GM12878 (cell line): ENCODE measurements at regions of chr5 and their contacts with region 1.

Region 1: DNA sequence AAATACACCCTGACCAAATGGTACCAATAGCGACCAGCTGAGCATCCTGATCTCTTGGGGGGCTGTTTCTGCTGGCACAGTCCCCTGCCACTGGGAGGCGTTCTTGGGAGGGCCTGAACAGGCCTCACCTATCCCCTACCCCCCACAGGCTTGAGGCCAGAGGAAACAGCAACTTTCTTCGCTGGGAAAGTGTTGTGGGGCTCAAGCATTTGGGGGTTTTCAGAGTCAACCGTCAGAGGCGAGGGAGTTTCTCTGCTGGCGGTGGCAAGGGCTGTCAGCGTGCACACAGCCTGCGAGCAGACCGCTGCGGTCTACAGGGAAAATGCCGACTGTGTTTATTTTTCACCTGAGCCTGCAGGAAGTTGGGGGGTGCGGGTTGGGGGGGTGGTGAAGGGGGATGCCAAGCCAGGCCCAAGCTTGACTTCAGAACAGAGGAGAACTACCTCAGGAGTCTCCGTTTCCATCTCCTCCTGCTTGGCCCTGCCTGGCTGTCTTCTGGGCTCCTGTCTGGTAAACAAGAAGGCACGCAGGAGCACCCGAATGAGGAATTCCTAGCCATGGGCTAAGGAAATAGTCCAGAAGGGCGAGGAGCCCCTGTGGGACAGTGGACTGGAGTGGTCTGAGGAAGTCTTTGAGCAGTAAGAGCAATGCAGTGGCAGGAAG is 18.0 kb downstream of the TCF7 start:
- DNase-seq: peak; percentile 92
- ATAC-seq: peak; percentile 85
- H3K4me3 ChIP-seq: peak overlapping the region; percentile 49; the same call in 1 of the 2 replicates
- H3K27ac ChIP-seq: peak overlapping the region; percentile 98
- H3K4me1 ChIP-seq: peaks cover 71% of the 10 kb centered on the region
- H3K27me3 ChIP-seq: no peaks in the 10 kb centered on the region
- CTCF ChIP-seq: peak; percentile 65 to 80 (median 75)
- EP300 ChIP-seq: peak; percentile 96 to 98
- POLR2A ChIP-seq: peak; percentile 47
- RAD21 ChIP-seq: peak; percentile 76

Region 2: DNA sequence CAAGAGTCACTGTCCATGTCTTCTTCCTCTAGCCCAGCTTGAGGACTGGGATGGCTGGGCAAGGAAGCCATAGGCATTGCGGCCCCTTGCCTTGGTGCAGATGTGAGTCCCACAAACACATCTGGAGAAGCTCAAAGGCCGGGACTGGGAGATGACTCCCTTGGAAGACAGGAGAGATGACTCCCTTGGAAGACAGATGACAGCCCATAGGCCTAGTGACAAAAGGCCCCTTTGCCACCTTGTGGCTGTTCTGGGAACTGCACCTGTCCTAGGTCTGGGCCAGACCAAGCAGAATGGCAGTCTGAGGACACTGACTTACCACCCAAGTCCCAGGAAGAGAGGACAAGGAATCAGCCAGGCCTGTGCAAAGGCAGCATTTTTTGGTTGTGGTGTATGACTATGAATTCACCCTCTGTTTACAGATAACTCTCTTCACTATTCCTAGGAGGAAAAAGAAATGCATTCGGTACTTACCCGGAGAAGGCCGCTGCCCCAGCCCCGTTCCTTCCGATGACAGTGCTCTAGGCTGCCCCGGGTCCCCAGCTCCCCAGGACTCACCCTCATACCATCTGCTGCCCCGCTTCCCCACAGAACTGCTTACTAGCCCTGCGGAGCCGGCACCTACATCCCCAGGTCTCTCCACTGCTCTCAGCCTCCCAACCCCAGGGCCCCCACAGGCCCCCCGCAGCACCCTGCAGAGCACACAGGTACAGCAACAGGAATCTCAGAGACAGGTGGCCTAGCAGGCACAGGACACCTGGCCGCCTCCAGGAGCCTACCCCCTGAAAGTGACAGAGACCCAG is 13.5 kb after region 1 on chr5:
- CTCF ChIA-PET with region 1: interaction called, 184 read pairs
- POLR2A ChIA-PET with region 1: interaction called, 102 read pairs
- RAD21 ChIA-PET with region 1: interaction called, 128 read pairs
- SMC1A ChIA-PET with region 1: interaction called, 76 read pairs
- in situ Hi-C with region 1: no loop called
- intact Hi-C with region 1: loop called (anchors 1 kb)
- DNase-seq: no peak
- ATAC-seq: peak; percentile 86
- H3K4me3 ChIP-seq: no peak overlapping the region
- H3K27ac ChIP-seq: 0 out of 2 replicates have a peak overlapping the region, but pooled peaks have one; percentile 22
- H3K4me1 ChIP-seq: peaks cover 3% of the 10 kb centered on the region
- H3K27me3 ChIP-seq: no peaks in the 10 kb centered on the region
- CTCF ChIP-seq: peak; percentile 92 to 96 (median 94)
- EP300 ChIP-seq: no peak
- POLR2A ChIP-seq: no peak
- RAD21 ChIP-seq: peak; percentile 85

Region 3: DNA sequence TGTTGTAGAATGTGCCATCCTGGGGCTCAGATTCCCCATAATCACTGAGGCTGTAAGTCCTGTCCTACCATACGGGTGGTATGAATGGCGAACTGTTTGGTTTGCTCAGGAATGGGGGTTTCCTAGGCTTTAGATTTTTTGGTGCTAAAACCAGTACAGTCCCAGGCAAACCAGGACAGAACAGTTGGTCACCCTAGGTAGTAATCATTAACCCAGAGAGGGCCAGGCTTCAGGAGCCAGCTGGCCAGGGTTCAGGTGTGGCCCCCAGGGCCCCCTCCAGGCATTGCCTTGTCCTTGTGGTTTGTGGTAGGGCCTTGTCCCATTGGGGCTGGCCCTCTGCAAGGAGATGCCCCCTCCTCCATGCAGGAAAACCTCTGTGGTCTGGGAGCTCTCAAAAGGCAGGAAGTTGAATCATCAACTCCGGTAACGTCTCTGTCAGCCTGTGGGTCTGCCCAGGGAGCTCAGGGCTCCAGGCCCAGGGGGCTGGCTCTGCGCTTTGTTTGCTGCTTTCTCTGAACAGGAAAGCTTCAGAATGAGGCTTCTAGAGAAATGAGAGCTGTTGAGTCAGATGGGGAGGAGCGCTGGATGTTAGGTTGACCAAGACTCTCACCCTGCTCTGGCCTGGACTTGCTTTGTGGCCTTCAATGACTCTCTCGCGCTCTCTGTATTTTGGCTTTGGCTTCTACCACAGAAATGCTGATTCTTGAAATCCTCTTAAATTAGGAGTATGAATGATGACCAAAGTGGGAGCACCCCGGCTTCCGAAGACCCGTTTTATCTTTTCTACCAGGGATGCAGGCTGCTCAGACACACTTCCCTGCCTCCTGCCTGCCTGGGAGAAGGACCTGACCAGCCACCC is 370.8 kb after region 1 on chr5:
- CTCF ChIA-PET with region 1: no interaction called
- POLR2A ChIA-PET with region 1: no interaction called
- RAD21 ChIA-PET with region 1: no interaction called
- SMC1A ChIA-PET with region 1: no interaction called
- in situ Hi-C with region 1: no loop called
- intact Hi-C with region 1: no loop called
- DNase-seq: peak; percentile 53
- ATAC-seq: peak; percentile 93
- H3K4me3 ChIP-seq: no peak overlapping the region
- H3K27ac ChIP-seq: peak overlapping the region; percentile 67
- H3K4me1 ChIP-seq: peaks cover 15% of the 10 kb centered on the region
- H3K27me3 ChIP-seq: no peaks in the 10 kb centered on the region
- CTCF ChIP-seq: no peak
- EP300 ChIP-seq: no peak
- POLR2A ChIP-seq: peak; percentile 59
- RAD21 ChIP-seq: 0 out of 2 replicates have a peak, but pooled peaks have one; percentile 11